ENCODE measurements at regions of chr1 and their contacts with region 1.

Region 1: DNA sequence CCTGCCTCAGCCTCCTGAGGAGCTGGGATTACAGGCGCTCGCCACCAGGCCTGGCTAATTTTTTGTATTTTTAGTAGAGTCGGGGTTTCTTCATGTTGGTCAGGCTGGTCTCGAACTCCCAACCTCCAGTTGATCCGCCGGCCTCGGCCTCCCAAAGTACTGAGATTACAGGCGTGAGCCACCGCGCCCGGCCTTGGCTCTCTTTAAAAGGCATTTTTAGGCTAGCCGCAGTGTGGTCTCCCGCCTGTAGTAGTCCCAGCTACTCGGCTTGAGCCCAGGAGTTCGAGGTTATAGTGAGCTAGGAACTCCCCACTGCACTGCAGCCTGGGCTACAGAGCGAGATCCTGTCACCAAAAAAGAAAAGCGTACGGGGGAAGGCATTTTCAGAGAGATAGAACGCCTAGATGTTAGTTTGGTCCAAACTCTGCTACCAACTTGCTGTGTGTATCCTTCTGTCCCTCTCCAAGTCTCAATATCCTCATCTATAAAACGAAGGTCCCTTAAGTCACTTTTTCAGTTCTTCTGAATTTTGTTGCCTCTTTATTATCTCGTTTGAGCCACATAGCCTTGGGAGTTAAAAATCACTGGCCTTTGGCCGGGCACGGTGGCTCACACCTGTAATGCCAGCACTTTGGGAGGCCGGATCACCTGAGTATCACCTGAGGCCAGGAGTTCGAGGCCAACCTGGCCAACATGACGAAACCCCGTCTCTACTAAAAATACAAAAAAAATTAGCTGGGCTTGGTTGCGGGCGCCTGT is 734 bp downstream of the MED18 start:
- DNase-seq: no peak
- ATAC-seq: peak; percentile 50
- H3K4me3 ChIP-seq: peak overlapping the region; percentile 57 to 95
- H3K27ac ChIP-seq: peak overlapping the region; percentile 92
- H3K4me1 ChIP-seq: no peaks in the 10 kb centered on the region
- H3K27me3 ChIP-seq: no peaks in the 10 kb centered on the region
- CTCF ChIP-seq: no peak

Region 2: DNA sequence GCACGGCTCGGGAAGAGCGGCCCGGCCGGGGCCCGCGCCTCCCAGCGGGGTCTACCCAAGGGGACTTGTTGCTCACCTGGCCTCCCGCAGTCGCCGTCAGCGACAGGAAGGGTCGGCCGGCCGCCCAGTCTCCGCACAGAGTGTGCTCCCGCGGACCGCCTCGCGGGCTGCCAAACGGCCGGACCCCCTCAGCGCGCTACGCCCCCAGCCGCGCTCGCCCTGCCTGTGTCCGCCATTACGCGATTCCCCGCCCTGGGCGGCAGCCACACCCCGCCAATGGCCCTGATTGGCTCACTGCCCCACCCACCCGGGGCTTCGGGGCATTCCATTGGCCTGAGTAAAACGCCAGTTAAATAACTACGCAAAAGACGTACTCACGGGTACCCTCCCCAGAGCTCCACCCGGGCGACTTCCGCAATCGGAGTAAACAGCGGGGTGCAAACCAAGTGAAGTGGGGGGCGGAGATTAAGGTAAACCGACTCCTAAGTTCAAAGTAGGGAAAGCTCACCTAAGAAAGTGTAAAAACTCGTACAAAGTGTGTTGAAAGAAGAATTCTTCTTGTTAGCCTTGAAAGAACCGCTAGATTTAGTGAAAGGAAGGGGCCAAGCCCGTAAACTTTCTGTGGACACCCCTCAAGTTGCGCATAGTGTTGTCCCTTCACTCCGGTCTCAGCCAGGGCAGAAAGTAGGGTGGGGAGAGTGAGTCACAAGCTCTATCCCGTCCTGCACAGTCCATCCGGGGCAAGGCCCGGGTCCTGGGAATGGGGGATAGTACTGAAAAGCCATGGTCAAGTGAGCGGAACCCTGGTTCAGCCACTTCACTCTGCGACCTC is 839.4 kb before region 1 on chr1 and contains the start of gene WASF2:
- CTCF ChIA-PET with region 1: no interaction called
- POLR2A ChIA-PET with region 1: interaction called, 15 read pairs
- in situ Hi-C with region 1: no loop called
- intact Hi-C with region 1: no loop called
- DNase-seq: peak; percentile 91
- ATAC-seq: peak; percentile 94
- H3K4me3 ChIP-seq: peak within 1 kb of the TSS; percentile 93 to 100
- H3K27ac ChIP-seq: peak within 1 kb of the TSS; percentile 99
- H3K4me1 ChIP-seq: peaks cover 25% of the 10 kb centered on the region
- H3K27me3 ChIP-seq: no peaks in the 10 kb centered on the region
- CTCF ChIP-seq: no peak
- total RNA-seq, gene WASF2: 121 TPM

Region 3: GRCh38 chr1:27894521-27894920 is 435.1 kb before region 1 on chr1:
- CTCF ChIA-PET with region 1: no interaction called
- POLR2A ChIA-PET with region 1: interaction called, 13 read pairs
- in situ Hi-C with region 1: no loop called
- intact Hi-C with region 1: no loop called
- DNase-seq: no peak
- ATAC-seq: no peak
- H3K4me3 ChIP-seq: no peak overlapping the region
- H3K27ac ChIP-seq: no peak overlapping the region
- H3K4me1 ChIP-seq: no peaks in the 10 kb centered on the region
- H3K27me3 ChIP-seq: no peaks in the 10 kb centered on the region
- CTCF ChIP-seq: no peak

Region 4: GRCh38 chr1:28259307-28260167 is 70.0 kb before region 1 on chr1 and contains the start of gene SESN2:
- CTCF ChIA-PET with region 1: no interaction called
- POLR2A ChIA-PET with region 1: no interaction called
- in situ Hi-C with region 1: no loop called
- intact Hi-C with region 1: loop called (anchors 10 kb)
- DNase-seq: peak; percentile 100
- ATAC-seq: peak; percentile 94
- H3K4me3 ChIP-seq: peak within 1 kb of the TSS; percentile 80 to 98
- H3K27ac ChIP-seq: peak within 1 kb of the TSS; percentile 88
- H3K4me1 ChIP-seq: peaks cover 31% of the 10 kb centered on the region
- H3K27me3 ChIP-seq: no peaks in the 10 kb centered on the region
- CTCF ChIP-seq: no peak
- total RNA-seq, gene SESN2: 19.7 TPM

Region 5: DNA sequence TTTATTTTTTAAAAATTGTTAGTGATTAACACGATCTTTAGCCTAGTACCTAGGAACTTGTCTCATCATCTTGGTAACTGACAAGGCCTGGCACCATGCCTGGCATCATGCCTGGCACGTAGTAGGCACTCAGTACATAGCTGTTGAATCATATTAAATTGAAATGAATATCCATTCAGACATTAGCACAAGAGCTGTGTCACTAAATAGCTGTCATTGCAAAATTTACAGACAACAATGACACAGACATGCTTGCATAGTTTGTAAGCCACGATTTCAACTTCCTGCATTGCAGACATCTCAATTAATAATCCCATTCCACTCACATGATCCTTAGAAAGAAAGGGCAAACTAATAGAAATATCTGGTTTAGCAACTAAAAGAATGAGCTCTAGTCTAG is 24.5 kb after region 1 on chr1:
- CTCF ChIA-PET with region 1: no interaction called
- POLR2A ChIA-PET with region 1: interaction called, 12 read pairs
- in situ Hi-C with region 1: no loop called
- intact Hi-C with region 1: no loop called
- DNase-seq: no peak
- ATAC-seq: peak; percentile 24; the same call in 1 of the 2 replicates
- H3K4me3 ChIP-seq: no peak overlapping the region
- H3K27ac ChIP-seq: no peak overlapping the region
- H3K4me1 ChIP-seq: no peaks in the 10 kb centered on the region
- H3K27me3 ChIP-seq: no peaks in the 10 kb centered on the region
- CTCF ChIP-seq: no peak

Measured in Panc1 (cell line).